Naive thymus-derived CD4-positive, alpha-beta T cell (primary cell): ENCODE measurements at regions of chr7 and their contacts with region 1.

Region 1: GRCh38 chr7:8134089-8134733 is 127.8 kb downstream of the ICA1 start:
- DNase-seq: peak in 8 of 9 donors; percentile 25 to 51 (median 44)
- ATAC-seq: peak; percentile 32
- H3K4me3 ChIP-seq: peak overlapping the region; percentile 7
- H3K4me3 Mint-ChIP-seq: peak overlapping the region; percentile 25 to 82 (median 61)
- H3K27ac ChIP-seq: peak overlapping the region; percentile 47
- H3K27ac Mint-ChIP-seq: peak overlapping the region; percentile 78 to 98 (median 94)
- H3K4me1 ChIP-seq: peaks cover 45 to 50% of the 10 kb centered on the region in 2 donors
- H3K4me1 Mint-ChIP-seq: peaks cover 38 to 65% (median 56%) of the 10 kb centered on the region in 7 donors
- H3K27me3 ChIP-seq: no peaks in the 10 kb centered on the region
- H3K27me3 Mint-ChIP-seq: no peaks in the 10 kb centered on the region

Region 2: GRCh38 chr7:7996576-7996975 is 137.6 kb before region 1 on chr7:
- CTCF ChIA-PET with region 1: no interaction called
- POLR2A ChIA-PET with region 1: no interaction called
- intact Hi-C with region 1: no loop called
- DNase-seq: no peak
- ATAC-seq: no peak
- H3K4me3 ChIP-seq: no peak overlapping the region
- H3K4me3 Mint-ChIP-seq: peak overlapping the region in 1 of 10 donors; percentile 7
- H3K27ac ChIP-seq: no peak overlapping the region
- H3K27ac Mint-ChIP-seq: peak overlapping the region in 5 of 9 donors; percentile 6 to 44 (median 19)
- H3K4me1 ChIP-seq: peaks cover 0 to 11% of the 10 kb centered on the region in 2 donors
- H3K4me1 Mint-ChIP-seq: peaks cover 6 to 27% (median 17%) of the 10 kb centered on the region in 7 donors
- H3K27me3 ChIP-seq: no peaks in the 10 kb centered on the region
- H3K27me3 Mint-ChIP-seq: no peaks in the 10 kb centered on the region

Region 3: GRCh38 chr7:8044761-8045430 is 89.3 kb before region 1 on chr7:
- CTCF ChIA-PET with region 1: no interaction called
- POLR2A ChIA-PET with region 1: interaction called, 3 read pairs
- intact Hi-C with region 1: loop called in 1 of 2 experiments (anchors 2 kb)
- DNase-seq: no peak
- ATAC-seq: no peak
- H3K4me3 ChIP-seq: no peak overlapping the region
- H3K4me3 Mint-ChIP-seq: peak overlapping the region in 1 of 10 donors; percentile 7
- H3K27ac ChIP-seq: no peak overlapping the region
- H3K27ac Mint-ChIP-seq: peak overlapping the region in 2 of 9 donors; percentile 38 to 74
- H3K4me1 ChIP-seq: peaks cover 0 to 5% of the 10 kb centered on the region in 2 donors
- H3K4me1 Mint-ChIP-seq: peaks cover 28 to 68% (median 61%) of the 10 kb centered on the region in 7 donors
- H3K27me3 ChIP-seq: no peaks in the 10 kb centered on the region
- H3K27me3 Mint-ChIP-seq: no peaks in the 10 kb centered on the region

Region 4: DNA sequence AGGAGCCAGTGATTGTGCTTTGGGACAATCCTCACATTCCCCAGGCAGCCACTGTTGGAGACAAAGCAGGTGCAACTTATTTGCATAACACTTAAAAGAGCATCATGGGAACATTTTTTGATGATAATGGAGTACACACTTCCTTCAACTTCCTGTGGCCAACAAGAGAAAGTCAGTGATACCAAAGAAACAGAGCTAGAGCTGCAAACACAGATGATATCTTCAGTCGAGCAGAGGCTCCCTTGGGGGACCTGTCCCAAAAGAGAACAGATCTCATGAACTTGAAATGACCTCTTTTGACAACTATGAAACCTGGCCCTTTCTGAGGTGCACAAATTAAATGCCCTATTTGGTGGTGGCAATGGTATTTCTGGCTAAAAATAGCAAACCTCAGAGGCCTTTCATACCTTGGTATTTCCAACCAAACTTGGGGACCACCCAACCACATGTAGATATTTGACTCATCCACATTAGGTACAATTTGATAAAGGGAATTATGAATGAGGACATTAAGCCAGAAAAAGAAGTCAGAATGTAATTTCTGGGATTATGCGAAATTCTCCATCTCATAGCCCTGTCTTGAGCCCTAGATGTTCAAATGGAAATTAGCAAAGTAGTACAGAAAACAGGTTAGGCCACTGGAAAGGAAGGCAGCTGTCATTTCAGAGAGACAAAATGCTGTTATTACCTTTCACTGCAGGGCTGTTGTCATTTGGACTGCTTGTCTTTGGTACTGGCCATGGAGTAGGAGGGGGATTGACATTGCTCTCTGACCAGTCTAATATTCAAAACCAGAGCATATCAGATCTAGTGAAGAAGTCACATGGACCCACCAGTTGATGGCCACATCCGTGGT is 18.4 kb before region 1 on chr7:
- CTCF ChIA-PET with region 1: no interaction called
- POLR2A ChIA-PET with region 1: no interaction called
- intact Hi-C with region 1: loop called in 1 of 2 experiments (anchors 2 kb)
- DNase-seq: peak in 3 of 9 donors; percentile 19 to 26 (median 19)
- ATAC-seq: peak; percentile 27
- H3K4me3 ChIP-seq: no peak overlapping the region
- H3K4me3 Mint-ChIP-seq: peak overlapping the region; percentile 16 to 60 (median 44)
- H3K27ac ChIP-seq: peak overlapping the region; percentile 23
- H3K27ac Mint-ChIP-seq: peak overlapping the region; percentile 43 to 95 (median 84)
- H3K4me1 ChIP-seq: peaks cover 26 to 29% of the 10 kb centered on the region in 2 donors
- H3K4me1 Mint-ChIP-seq: peaks cover 27 to 60% (median 48%) of the 10 kb centered on the region in 7 donors
- H3K27me3 ChIP-seq: no peaks in the 10 kb centered on the region
- H3K27me3 Mint-ChIP-seq: no peaks in the 10 kb centered on the region

Region 5: DNA sequence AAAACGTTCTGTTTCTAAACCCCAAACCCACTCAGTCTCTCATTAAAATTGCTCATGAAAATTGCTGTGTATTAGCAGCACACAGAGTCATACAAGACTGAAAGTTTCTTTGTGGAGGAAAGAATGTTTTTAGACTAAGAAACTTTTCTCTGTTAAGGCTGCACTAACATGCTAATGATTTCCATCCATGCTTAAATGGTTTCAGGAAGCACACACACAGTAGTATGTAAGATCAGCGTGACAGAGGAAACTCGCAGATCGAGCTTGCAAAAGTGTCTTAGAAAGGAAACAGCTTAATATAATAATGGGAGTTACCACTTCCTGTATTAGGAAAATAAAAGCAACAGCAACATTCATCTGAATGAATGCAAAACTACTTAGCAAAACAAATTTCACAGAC is 15.0 kb after region 1 on chr7:
- CTCF ChIA-PET with region 1: interaction called, 4 read pairs
- POLR2A ChIA-PET with region 1: interaction called, 24 read pairs
- intact Hi-C with region 1: loop called (anchors 1 to 2 kb)
- DNase-seq: peak in 1 of 9 donors; percentile 28
- ATAC-seq: peak; percentile 66
- H3K4me3 ChIP-seq: no peak overlapping the region
- H3K4me3 Mint-ChIP-seq: peak overlapping the region in 9 of 10 donors; percentile 7 to 71 (median 48)
- H3K27ac ChIP-seq: peak overlapping the region; percentile 3
- H3K27ac Mint-ChIP-seq: peak overlapping the region in 8 of 9 donors; percentile 42 to 81 (median 76)
- H3K4me1 ChIP-seq: peaks cover 7 to 14% of the 10 kb centered on the region in 2 donors
- H3K4me1 Mint-ChIP-seq: peaks cover 21 to 78% (median 70%) of the 10 kb centered on the region in 7 donors
- H3K27me3 ChIP-seq: no peaks in the 10 kb centered on the region
- H3K27me3 Mint-ChIP-seq: no peaks in the 10 kb centered on the region

Region 6: GRCh38 chr7:8176370-8177081 is 42.3 kb after region 1 on chr7:
- CTCF ChIA-PET with region 1: interaction called, 4 read pairs
- POLR2A ChIA-PET with region 1: interaction called, 22 read pairs
- intact Hi-C with region 1: loop called (anchors 1 kb)
- DNase-seq: peak; percentile 20 to 74 (median 70)
- ATAC-seq: peak; percentile 91
- H3K4me3 ChIP-seq: peak overlapping the region; percentile 44
- H3K4me3 Mint-ChIP-seq: peak overlapping the region; percentile 73 to 86 (median 77)
- H3K27ac ChIP-seq: peak overlapping the region; percentile 72
- H3K27ac Mint-ChIP-seq: peak overlapping the region; percentile 88 to 97 (median 96)
- H3K4me1 ChIP-seq: peaks cover 48 to 50% of the 10 kb centered on the region in 2 donors
- H3K4me1 Mint-ChIP-seq: peaks cover 36 to 70% (median 67%) of the 10 kb centered on the region in 7 donors
- H3K27me3 ChIP-seq: no peaks in the 10 kb centered on the region
- H3K27me3 Mint-ChIP-seq: no peaks in the 10 kb centered on the region

Region 7: DNA sequence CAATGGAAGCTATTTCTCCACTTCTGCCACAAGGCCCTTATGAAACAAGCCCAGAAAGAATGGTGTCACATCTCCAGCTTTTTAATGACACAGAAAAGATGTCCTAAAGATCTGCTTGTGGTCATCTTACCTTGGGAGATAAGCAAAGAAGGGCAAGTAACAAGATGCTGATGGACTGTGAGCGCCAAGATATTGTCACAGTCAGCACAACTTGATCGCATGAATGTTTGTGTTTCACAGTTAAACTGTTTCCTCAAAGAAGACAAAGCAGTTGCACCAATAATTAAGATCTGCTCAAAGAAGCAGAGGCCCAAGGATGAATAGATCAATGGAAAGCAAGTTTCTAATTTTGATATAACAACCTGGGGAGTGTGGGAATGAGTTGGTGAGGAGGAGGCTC is 111.8 kb after region 1 on chr7:
- CTCF ChIA-PET with region 1: no interaction called
- POLR2A ChIA-PET with region 1: no interaction called
- intact Hi-C with region 1: no loop called
- DNase-seq: no peak
- ATAC-seq: no peak
- H3K4me3 ChIP-seq: no peak overlapping the region
- H3K4me3 Mint-ChIP-seq: no peak overlapping the region
- H3K27ac ChIP-seq: no peak overlapping the region
- H3K27ac Mint-ChIP-seq: no peak overlapping the region
- H3K4me1 ChIP-seq: no peaks in the 10 kb centered on the region
- H3K4me1 Mint-ChIP-seq: peaks cover 0 to 2% (median 0%) of the 10 kb centered on the region in 7 donors
- H3K27me3 ChIP-seq: no peaks in the 10 kb centered on the region
- H3K27me3 Mint-ChIP-seq: peaks cover 0 to 24% (median 6%) of the 10 kb centered on the region in 5 donors

Region 8: GRCh38 chr7:8325063-8325462 is 190.9 kb after region 1 on chr7:
- CTCF ChIA-PET with region 1: no interaction called
- POLR2A ChIA-PET with region 1: no interaction called
- intact Hi-C with region 1: no loop called
- DNase-seq: no peak
- ATAC-seq: no peak
- H3K4me3 ChIP-seq: no peak overlapping the region
- H3K4me3 Mint-ChIP-seq: no peak overlapping the region
- H3K27ac ChIP-seq: no peak overlapping the region
- H3K27ac Mint-ChIP-seq: no peak overlapping the region
- H3K4me1 ChIP-seq: no peaks in the 10 kb centered on the region
- H3K4me1 Mint-ChIP-seq: no peaks in the 10 kb centered on the region
- H3K27me3 ChIP-seq: no peaks in the 10 kb centered on the region
- H3K27me3 Mint-ChIP-seq: peaks cover 5 to 31% (median 29%) of the 10 kb centered on the region in 5 donors

Region 9: DNA sequence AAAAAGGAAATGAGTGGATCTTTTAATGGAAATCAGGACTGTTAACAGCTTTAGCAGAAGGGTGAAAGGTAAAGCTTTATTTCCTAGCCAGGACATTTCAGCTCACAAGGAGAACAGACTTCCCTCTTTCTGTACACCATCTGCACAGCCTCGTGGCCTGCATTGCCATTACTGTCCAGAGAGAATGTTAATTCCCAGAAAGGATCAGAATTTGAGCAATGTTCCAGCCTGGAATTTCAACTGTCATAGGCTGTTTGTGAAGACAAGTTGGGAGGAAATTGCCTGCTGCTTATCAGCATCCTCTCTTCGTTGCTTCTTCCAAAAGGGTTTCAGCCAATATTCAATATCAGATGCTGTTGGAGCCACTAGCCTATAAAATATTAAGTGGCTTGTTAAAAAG is 321.2 kb after region 1 on chr7:
- CTCF ChIA-PET with region 1: no interaction called
- POLR2A ChIA-PET with region 1: no interaction called
- intact Hi-C with region 1: no loop called
- DNase-seq: no peak
- ATAC-seq: no peak
- H3K4me3 ChIP-seq: no peak overlapping the region
- H3K4me3 Mint-ChIP-seq: no peak overlapping the region
- H3K27ac ChIP-seq: no peak overlapping the region
- H3K27ac Mint-ChIP-seq: no peak overlapping the region
- H3K4me1 ChIP-seq: no peaks in the 10 kb centered on the region
- H3K4me1 Mint-ChIP-seq: no peaks in the 10 kb centered on the region
- H3K27me3 ChIP-seq: no peaks in the 10 kb centered on the region
- H3K27me3 Mint-ChIP-seq: peaks cover 0 to 35% (median 19%) of the 10 kb centered on the region in 5 donors